ENCODE measurements at regions of chr18 and their contacts with region 1.

Region 1: DNA sequence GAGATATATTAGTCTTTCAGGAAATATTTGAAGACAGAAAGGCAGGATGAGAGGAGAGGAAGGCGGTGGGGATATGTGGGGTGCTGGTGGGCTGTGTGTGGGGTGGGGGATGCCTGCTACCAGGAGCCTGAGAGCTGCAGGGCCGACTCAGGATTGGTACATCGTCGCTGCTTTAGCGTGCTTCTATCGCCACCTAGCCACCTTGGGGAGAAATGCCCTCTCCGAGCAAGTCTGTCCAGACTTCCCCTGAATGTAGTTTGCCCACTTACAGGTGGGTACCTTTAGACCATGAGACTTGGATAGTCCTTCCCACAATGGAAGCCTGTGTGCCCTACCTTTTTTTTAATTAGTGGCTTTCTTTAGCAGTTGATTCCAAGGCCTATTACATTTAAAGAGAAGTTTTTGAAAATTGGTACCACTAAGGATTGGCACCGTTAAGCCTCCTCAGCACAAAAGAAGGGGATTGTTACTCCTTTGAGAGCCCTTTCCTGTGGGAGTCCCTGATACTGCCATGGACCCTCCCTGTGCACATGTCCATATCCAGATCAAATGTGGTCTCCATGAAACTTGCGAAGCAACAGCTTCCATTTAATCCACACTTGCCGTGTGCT is 114.1 kb upstream of the NDUFV2 start:
- DNase-seq: peak; percentile 69
- H3K27ac ChIP-seq: 0 out of 2 replicates have a peak overlapping the region, but pooled peaks have one; percentile 33
- CTCF ChIP-seq: peak; percentile 89

Region 2: DNA sequence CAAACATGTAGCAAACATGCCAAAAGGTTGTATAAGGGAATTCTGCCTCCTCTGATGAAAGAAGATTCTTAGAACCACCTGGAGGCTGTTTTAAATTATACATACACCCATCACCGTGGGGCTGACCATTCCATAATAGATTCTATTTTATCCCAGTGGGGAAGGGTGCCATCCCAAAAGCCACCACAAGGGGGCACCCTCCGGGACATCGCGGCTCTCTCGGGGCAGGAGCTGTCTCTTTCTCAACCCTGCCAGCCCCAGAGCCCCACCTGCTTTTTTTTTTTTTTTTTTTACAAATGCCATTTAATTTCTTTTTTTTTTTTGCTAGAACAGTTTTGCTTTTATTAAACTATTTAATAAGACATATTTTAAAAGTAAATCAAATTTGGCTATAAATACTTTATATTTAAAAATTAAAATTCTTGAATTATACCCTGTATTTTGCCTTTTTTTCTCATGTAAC is 291.6 kb before region 1 on chr18:
- CTCF ChIA-PET with region 1: interaction called, 10 read pairs
- POLR2A ChIA-PET with region 1: no interaction called
- DNase-seq: peak; percentile 78
- H3K27ac ChIP-seq: no peak overlapping the region
- CTCF ChIP-seq: peak; percentile 92

Region 3: DNA sequence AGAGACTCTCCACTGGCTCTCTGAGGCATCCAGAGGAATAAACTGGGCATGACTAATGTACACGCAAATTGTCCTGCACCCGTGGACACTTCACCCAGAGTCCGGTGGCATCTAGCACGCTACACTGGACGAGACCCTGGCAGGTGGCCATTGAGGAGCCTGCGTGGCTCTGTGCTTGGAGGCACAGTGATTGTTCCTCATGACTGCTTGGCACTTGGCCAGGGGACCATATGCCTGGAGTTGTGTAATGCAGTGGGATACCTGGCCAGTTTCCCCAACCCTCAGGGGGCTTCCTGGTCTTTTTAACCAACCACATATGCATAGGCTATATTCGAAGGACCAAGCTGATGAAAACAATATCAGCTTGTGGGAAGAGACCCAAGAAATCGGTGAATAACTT is 216.4 kb before region 1 on chr18:
- CTCF ChIA-PET with region 1: no interaction called
- POLR2A ChIA-PET with region 1: no interaction called
- DNase-seq: no peak
- H3K27ac ChIP-seq: no peak overlapping the region
- CTCF ChIP-seq: no peak